ENCODE measurements at regions of chr5 and their contacts with region 1.

Region 1: DNA sequence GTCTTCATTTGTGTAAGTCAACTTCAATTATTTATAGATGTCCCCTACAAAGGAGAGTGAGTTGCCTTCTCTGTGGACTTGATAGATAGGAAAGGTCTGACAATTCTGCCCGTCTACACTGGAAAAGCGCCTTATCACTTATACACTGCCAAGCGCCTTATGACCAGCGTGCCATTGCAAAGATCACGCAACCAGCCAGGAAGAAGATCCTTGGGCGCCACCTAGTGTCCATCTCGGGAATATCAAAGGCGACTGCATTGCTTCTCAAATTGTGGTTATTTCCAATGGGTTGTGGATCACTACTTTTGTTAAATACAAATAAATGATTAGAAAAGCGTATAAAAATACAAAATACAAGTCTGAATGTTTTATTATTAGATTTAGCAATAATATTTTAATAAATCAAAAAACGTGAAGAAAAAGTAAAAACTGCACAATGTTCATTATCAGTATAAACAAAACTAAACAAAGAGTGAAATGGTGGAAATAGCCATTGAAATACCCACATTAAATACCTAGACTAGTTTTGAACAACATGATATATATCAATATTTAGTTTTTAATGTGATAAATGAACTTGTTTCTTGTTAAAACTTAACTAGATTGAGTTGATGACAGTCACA is 27.8 kb downstream of the SUB1 start:
- DNase-seq: peak; percentile 58 to 74
- ATAC-seq: peak; percentile 82 to 86
- H3K4me3 ChIP-seq: no peak overlapping the region
- H3K27ac ChIP-seq: no peak overlapping the region
- H3K4me1 ChIP-seq: peaks cover 9 to 10% of the 10 kb centered on the region in 2 donors
- H3K27me3 ChIP-seq: no peaks in the 10 kb centered on the region
- CTCF ChIP-seq: peak; percentile 79 to 93 (median 89)
- POLR2A ChIP-seq: no peak

Region 2: DNA sequence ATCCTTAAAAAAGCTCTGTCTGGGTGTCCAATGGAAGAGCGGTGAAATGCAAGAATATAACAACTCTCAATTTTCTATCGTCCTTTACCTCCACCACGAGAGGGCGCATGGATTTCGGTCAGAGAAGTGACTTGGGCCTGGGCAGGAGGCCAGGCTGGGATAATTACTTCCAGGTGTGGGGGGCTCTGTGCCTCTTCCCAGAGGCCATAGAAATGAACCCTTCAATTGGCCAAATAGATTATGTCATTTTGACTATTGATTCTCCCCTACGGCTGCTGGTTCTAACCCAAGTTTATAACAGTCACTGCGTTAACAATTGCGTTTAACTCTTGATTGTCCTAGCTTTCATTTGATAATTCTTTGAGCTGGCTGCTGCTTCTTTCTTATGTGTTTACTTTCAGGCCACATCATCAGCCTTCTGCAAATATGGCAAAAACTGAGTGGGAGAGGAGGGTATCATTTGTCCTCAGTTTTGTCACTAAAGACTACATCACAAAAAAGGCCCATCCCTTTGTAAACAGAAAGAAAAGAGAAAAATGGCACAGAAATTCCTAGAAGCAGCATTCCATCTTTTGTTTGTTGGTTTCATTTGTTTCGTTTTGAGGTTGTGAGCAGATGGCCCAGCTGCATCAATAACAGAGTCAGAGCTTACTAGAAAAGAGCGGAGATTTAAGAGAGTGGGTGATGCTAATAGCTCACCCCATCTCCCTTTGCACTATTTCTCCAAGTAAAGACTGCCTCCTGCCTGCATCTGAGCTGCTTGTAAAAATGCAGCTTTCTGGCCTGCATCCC is 123.2 kb before region 1 on chr5:
- in situ Hi-C with region 1: loop called (anchors 10 kb)
- intact Hi-C with region 1: loop called (anchors 1 kb)
- DNase-seq: peak; percentile 41 to 55
- ATAC-seq: peak; percentile 54 to 66
- H3K4me3 ChIP-seq: no peak overlapping the region
- H3K27ac ChIP-seq: no peak overlapping the region
- H3K4me1 ChIP-seq: peaks cover 0 to 2% of the 10 kb centered on the region in 2 donors
- H3K27me3 ChIP-seq: no peaks in the 10 kb centered on the region
- CTCF ChIP-seq: peak; percentile 53 to 77 (median 71)
- POLR2A ChIP-seq: no peak

Region 3: GRCh38 chr5:32531885-32532520 is 81.2 kb before region 1 on chr5:
- in situ Hi-C with region 1: no loop called
- intact Hi-C with region 1: no loop called
- DNase-seq: no peak
- ATAC-seq: no peak
- H3K4me3 ChIP-seq: no peak overlapping the region
- H3K27ac ChIP-seq: no peak overlapping the region
- H3K4me1 ChIP-seq: no peaks in the 10 kb centered on the region
- H3K27me3 ChIP-seq: no peaks in the 10 kb centered on the region
- CTCF ChIP-seq: no peak
- POLR2A ChIP-seq: no peak

Region 4: GRCh38 chr5:32651638-32652037 is 38.5 kb after region 1 on chr5:
- in situ Hi-C with region 1: no loop called
- intact Hi-C with region 1: no loop called
- DNase-seq: no peak
- ATAC-seq: no peak
- H3K4me3 ChIP-seq: no peak overlapping the region
- H3K27ac ChIP-seq: no peak overlapping the region
- H3K4me1 ChIP-seq: no peaks in the 10 kb centered on the region
- H3K27me3 ChIP-seq: no peaks in the 10 kb centered on the region
- CTCF ChIP-seq: no peak
- POLR2A ChIP-seq: no peak

Region 5: GRCh38 chr5:32664523-32664922 is 51.4 kb after region 1 on chr5:
- in situ Hi-C with region 1: no loop called
- intact Hi-C with region 1: no loop called
- DNase-seq: no peak
- ATAC-seq: no peak
- H3K4me3 ChIP-seq: no peak overlapping the region
- H3K27ac ChIP-seq: no peak overlapping the region
- H3K4me1 ChIP-seq: no peaks in the 10 kb centered on the region
- H3K27me3 ChIP-seq: no peaks in the 10 kb centered on the region
- CTCF ChIP-seq: no peak
- POLR2A ChIP-seq: no peak